ENCODE measurements at regions of chr12 and their contacts with region 1.

Region 1: GRCh38 chr12:38316391-38317129 is at the start of gene ALG10B:
- DNase-seq: peak; percentile 93
- ATAC-seq: peak; percentile 100
- H3K4me3 ChIP-seq: peak within 1 kb of the TSS; percentile 77 to 89
- H3K27ac ChIP-seq: peak within 1 kb of the TSS; percentile 70
- H3K4me1 ChIP-seq: no peaks in the 10 kb centered on the region; a peak in 1 of 4 replicates
- H3K27me3 ChIP-seq: no peaks in the 10 kb centered on the region
- CTCF ChIP-seq: peak; percentile 45 to 66 (median 63)
- POLR2A ChIP-seq: no peak
- RAD21 ChIP-seq: peak; percentile 87
- total RNA-seq, gene ALG10B: 9.0 TPM

Region 2: DNA sequence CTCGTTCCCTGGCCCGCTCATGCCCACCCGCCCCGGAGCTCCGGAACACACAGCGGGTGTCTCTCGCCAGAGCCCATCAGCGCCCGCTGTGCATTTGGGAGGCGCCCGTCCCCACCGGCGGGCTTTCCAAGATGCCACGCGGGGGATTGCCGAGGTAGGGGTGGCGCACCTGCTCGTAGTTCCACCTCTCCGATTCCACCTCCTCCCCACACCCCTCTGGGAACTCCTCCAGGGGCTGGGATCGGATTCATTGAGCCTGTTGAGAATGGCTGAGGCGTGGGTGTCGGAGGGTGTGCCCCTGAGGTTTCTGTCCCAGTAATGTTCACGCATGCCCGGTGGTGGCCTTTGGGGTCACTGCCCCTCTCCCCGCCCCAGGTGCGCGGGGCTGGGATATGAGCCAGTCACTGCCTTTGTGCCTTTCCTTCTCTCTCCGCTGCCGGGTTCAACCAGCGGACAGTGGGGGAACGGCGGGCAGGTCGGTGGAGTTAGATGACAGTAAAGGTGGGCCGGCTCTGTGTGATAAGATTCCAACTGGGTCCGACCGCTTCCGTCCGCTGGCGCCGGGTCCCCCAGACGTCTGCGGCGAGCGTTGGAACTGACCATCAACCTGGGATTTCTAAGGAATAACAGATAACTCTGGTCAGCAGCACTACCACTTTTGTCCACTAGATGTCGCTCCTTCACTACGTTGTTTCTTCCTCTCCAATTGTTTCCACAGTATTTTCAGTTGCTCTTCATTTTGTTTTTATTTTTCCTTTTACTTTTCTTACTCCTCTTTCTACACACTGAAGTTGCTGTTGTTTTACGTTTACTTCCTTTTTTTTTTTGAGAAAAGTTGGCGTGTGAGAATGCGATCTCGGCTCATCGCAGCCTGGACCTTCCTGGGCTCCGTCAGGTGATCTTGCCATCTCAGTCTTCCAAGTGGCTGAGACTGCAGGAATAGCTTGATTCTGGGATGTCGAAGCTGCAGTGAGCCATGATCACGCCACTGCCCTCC is 178.0 kb before region 1 on chr12:
- CTCF ChIA-PET with region 1: interaction called, 27 read pairs
- POLR2A ChIA-PET with region 1: no interaction called
- RAD21 ChIA-PET with region 1: interaction called in 1 of 2 experiments, 3 read pairs
- intact Hi-C with region 1: loop called (anchors 1 kb)
- DNase-seq: peak; percentile 61
- ATAC-seq: peak; percentile 91
- H3K4me3 ChIP-seq: peak overlapping the region; percentile 45 to 63
- H3K27ac ChIP-seq: peak overlapping the region; percentile 26; the same call in 1 of the 2 replicates
- H3K4me1 ChIP-seq: peaks cover 0 to 5% of the 10 kb centered on the region in 2 experiments; a peak in 1 of 4 replicates
- H3K27me3 ChIP-seq: no peaks in the 10 kb centered on the region
- CTCF ChIP-seq: peak; percentile 83 to 97 (median 85)
- POLR2A ChIP-seq: no peak
- RAD21 ChIP-seq: peak; percentile 90

Region 3: GRCh38 chr12:38269897-38270296 is 46.7 kb before region 1 on chr12:
- CTCF ChIA-PET with region 1: no interaction called
- POLR2A ChIA-PET with region 1: no interaction called
- RAD21 ChIA-PET with region 1: no interaction called
- intact Hi-C with region 1: no loop called
- DNase-seq: no peak
- ATAC-seq: no peak
- H3K4me3 ChIP-seq: no peak overlapping the region
- H3K27ac ChIP-seq: no peak overlapping the region
- H3K4me1 ChIP-seq: no peaks in the 10 kb centered on the region
- H3K27me3 ChIP-seq: no peaks in the 10 kb centered on the region
- CTCF ChIP-seq: no peak
- POLR2A ChIP-seq: no peak
- RAD21 ChIP-seq: no peak

Region 4: DNA sequence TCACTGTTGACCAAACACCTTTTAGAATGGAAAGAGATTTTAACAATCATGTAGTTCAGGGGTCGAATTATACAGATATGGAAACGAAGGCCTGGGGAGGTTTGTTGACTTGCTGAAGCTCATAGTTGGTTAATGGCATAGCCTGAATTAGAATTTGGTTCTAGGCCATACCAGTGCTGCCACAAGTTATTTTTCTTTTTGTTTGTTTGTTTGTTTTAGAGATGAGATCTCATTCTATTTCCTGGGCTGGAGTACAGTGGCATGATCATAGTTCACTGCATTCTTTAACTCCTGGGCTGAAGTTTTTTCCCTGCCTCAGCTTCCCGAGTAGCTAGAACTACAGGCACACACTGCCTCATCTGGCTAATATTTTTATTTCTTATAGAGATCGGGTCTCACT is 25.4 kb before region 1 on chr12:
- CTCF ChIA-PET with region 1: no interaction called
- POLR2A ChIA-PET with region 1: no interaction called
- RAD21 ChIA-PET with region 1: no interaction called
- intact Hi-C with region 1: no loop called
- DNase-seq: no peak
- ATAC-seq: no peak
- H3K4me3 ChIP-seq: no peak overlapping the region
- H3K27ac ChIP-seq: no peak overlapping the region
- H3K4me1 ChIP-seq: no peaks in the 10 kb centered on the region
- H3K27me3 ChIP-seq: no peaks in the 10 kb centered on the region
- CTCF ChIP-seq: no peak
- POLR2A ChIP-seq: no peak
- RAD21 ChIP-seq: no peak

Measured in HCT116 (cell line).